ENCODE measurements at regions of chr2 and their contacts with region 1.

Region 1: GRCh38 chr2:191150600-191151330 is at the start of gene STAT4:
- DNase-seq: peak; percentile 96
- ATAC-seq: peak; percentile 86
- H3K4me3 Mint-ChIP-seq: peak within 1 kb of the TSS; percentile 86
- H3K27ac Mint-ChIP-seq: peak within 1 kb of the TSS; percentile 87
- H3K4me1 Mint-ChIP-seq: peaks cover 68% of the 10 kb centered on the region
- H3K27me3 Mint-ChIP-seq: no peaks in the 10 kb centered on the region
- CTCF ChIP-seq: no peak
- total RNA-seq, gene STAT4: 70.8 to 72.2 TPM

Region 2: DNA sequence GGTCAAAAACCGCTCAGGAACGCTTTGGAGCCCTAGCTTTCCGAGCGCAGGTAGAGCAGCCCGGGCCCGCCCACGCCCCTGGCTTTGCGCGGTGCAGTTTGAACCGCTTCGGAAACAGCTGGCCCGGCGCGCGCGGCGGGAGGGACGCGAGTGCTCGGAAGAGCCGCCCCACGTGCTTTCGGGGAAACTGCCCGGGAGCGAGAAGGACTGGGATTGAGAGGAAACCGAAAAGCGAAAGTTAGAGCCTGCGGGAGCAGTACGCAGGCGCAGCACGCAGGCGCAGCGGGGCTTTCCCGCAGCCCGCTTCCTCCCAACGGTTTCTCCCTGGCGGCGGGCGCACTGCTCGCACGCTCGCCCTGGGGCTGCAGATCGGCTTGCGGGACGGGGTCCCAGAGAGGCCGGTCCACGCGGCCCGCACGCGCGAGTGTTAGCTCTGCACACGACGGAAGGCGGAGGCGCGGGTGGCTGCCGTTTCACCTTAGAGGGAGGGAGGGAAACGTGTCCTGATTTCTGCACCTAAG is 130.5 kb before region 1 on chr2:
- CTCF ChIA-PET with region 1: interaction called, 5 read pairs
- POLR2A ChIA-PET with region 1: interaction called, 57 read pairs
- intact Hi-C with region 1: no loop called
- DNase-seq: peak; percentile 95
- ATAC-seq: peak; percentile 64
- H3K4me3 Mint-ChIP-seq: no peak overlapping the region
- H3K27ac Mint-ChIP-seq: no peak overlapping the region
- H3K4me1 Mint-ChIP-seq: peaks cover 33% of the 10 kb centered on the region
- H3K27me3 Mint-ChIP-seq: no peaks in the 10 kb centered on the region
- CTCF ChIP-seq: no peak

Region 3: DNA sequence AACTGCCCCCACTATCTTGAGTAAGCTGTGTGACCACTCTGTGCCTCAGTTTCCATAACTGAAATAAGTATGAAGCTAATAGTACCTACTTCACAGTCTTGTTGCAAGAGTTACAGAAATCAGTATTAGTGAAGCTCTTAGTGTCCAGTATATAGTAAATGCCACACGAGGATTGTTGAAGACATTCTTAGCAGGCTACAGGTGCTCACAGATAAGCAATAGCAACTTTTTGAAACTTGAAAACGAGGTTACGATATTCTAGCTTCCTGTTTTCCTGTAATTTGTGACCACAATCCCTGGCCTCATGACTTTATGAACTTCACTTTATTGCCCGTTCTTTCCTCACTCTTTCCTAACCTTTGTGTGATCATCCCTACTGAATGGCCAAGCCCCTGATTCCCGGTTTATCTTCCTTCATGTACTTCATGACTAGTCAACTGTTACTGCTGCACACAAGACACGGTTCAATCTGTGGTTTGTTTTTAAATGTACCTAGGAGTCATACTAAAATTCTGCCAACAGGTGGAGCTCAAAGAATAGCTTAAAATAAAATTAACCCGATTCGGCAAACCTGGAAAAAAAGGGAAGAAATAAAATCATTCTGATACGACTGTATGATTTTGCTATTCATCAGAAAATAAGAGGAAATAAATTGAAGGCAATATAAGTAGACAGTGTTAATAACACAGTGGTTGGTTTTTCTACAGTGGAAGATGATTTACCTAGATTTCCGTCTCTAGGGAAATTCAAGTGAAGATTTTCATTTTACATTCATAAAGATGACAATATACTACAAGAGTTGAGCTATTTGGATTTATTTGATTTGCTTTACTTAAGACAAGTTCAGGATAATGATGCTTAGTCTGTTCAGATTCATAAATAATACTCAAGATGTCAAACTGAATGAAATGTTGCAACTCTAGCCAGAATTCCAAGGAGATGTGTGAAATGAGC is 98.7 kb before region 1 on chr2:
- CTCF ChIA-PET with region 1: interaction called, 643 read pairs
- POLR2A ChIA-PET with region 1: interaction called, 20 read pairs
- intact Hi-C with region 1: loop called (anchors 1 kb)
- DNase-seq: no peak
- ATAC-seq: peak; percentile 72
- H3K4me3 Mint-ChIP-seq: no peak overlapping the region
- H3K27ac Mint-ChIP-seq: no peak overlapping the region
- H3K4me1 Mint-ChIP-seq: peaks cover 21% of the 10 kb centered on the region
- H3K27me3 Mint-ChIP-seq: no peaks in the 10 kb centered on the region
- CTCF ChIP-seq: peak; percentile 94

Region 4: DNA sequence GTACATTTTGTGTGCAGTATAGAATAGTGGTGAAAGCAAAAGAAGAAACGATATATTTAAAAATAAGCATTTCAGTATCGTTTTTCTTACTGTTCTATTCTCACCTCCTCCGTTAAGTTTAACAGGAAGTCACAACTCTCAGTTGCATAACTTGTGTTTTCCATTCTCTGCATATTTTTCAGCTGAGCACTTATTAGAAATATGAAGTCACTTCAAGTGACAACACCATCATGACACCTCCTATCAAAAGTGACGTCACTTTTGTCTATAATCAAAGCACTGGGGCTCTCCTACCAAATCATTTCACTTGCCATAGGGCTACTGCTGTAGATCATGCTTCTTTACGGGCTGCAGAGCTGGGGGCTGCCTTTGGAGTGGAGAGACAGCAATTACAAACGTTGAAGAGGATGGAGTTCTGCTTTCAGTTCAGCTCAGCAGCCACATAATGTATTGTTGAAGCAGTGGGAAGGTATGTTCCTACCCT is 36.3 kb before region 1 on chr2:
- CTCF ChIA-PET with region 1: interaction called, 17 read pairs
- POLR2A ChIA-PET with region 1: interaction called, 67 read pairs
- intact Hi-C with region 1: loop called (anchors 2 kb)
- DNase-seq: peak; percentile 63
- ATAC-seq: peak; percentile 28
- H3K4me3 Mint-ChIP-seq: peak overlapping the region; percentile 65
- H3K27ac Mint-ChIP-seq: peak overlapping the region; percentile 98
- H3K4me1 Mint-ChIP-seq: peaks cover 83% of the 10 kb centered on the region
- H3K27me3 Mint-ChIP-seq: no peaks in the 10 kb centered on the region
- CTCF ChIP-seq: no peak

Region 5: GRCh38 chr2:191195021-191195420 is 44.3 kb after region 1 on chr2:
- CTCF ChIA-PET with region 1: interaction called, 9 read pairs
- POLR2A ChIA-PET with region 1: interaction called, 12 read pairs
- intact Hi-C with region 1: no loop called
- DNase-seq: no peak
- ATAC-seq: no peak
- H3K4me3 Mint-ChIP-seq: peak overlapping the region; percentile 19
- H3K27ac Mint-ChIP-seq: peak overlapping the region; percentile 100
- H3K4me1 Mint-ChIP-seq: peaks cover 68% of the 10 kb centered on the region
- H3K27me3 Mint-ChIP-seq: no peaks in the 10 kb centered on the region
- CTCF ChIP-seq: no peak

Measured in activated CD8-positive, alpha-beta T cell treated with anti-CD3 and anti-CD28 coated beads for 36 hours (primary cell).